Activated CD8-positive, alpha-beta T cell treated with anti-CD3 and anti-CD28 coated beads, Interleukin-2, amount 10 ng/mL, durations not matched to agents 7 days and 5 days (primary cell): ENCODE measurements at regions of chr3 and their contacts with region 1.

Region 1: GRCh38 chr3:100796556-100796955 is 87.3 kb downstream of the TFG start:
- DNase-seq: no peak
- ATAC-seq: no peak
- H3K4me3 Mint-ChIP-seq: peak overlapping the region; percentile 35
- H3K27ac Mint-ChIP-seq: no peak overlapping the region
- H3K4me1 Mint-ChIP-seq: peaks cover 6% of the 10 kb centered on the region
- H3K27me3 Mint-ChIP-seq: peaks cover 5% of the 10 kb centered on the region

Region 2: GRCh38 chr3:100719136-100719535 is 77.4 kb before region 1 on chr3:
- CTCF ChIA-PET with region 1: interaction called, 12 read pairs
- POLR2A ChIA-PET with region 1: no interaction called
- DNase-seq: no peak
- ATAC-seq: no peak
- H3K4me3 Mint-ChIP-seq: no peak overlapping the region
- H3K27ac Mint-ChIP-seq: no peak overlapping the region
- H3K4me1 Mint-ChIP-seq: peaks cover 30% of the 10 kb centered on the region
- H3K27me3 Mint-ChIP-seq: no peaks in the 10 kb centered on the region

Region 3: DNA sequence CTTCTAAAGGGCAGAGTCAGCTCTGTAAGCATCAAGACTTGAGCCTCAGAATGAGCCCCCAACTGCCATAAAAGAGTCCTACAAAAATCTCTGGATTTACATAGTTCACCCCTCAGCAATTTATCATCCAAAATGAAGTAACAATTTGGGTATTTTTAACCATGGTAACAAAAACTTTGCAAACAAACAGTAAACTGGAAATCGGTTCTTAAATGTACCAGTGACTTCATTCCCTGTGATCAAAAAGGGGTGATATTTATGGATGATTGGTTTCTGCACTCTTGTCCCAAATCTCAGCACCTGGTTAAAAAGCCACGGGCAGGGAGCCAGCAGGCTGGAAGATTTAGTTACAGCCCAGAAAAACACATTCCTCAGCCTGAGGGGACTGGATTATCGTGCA is 13.7 kb before region 1 on chr3:
- CTCF ChIA-PET with region 1: interaction called, 32 read pairs
- POLR2A ChIA-PET with region 1: no interaction called
- DNase-seq: no peak
- ATAC-seq: no peak
- H3K4me3 Mint-ChIP-seq: no peak overlapping the region
- H3K27ac Mint-ChIP-seq: no peak overlapping the region
- H3K4me1 Mint-ChIP-seq: no peaks in the 10 kb centered on the region
- H3K27me3 Mint-ChIP-seq: peaks cover 2% of the 10 kb centered on the region

Region 4: DNA sequence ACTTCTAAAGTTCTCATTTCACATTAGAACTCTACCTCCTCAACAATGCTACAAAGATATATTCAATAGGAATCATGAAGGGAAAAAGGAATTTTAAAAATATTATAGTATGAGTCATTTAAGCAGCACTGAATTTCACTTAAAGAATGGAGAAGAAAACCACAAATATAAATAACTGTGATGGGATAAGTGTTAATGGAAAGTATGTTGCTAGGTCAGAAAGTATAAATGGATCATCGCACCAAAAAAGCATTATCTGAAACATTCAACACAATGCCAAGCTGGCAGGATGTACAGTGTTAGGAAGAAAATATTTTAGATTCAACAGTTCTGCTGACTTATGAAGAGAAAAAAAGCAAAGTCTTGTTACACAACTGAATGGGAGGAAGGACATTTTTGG is 14.1 kb after region 1 on chr3:
- CTCF ChIA-PET with region 1: interaction called, 11 read pairs
- POLR2A ChIA-PET with region 1: no interaction called
- DNase-seq: no peak
- ATAC-seq: no peak
- H3K4me3 Mint-ChIP-seq: no peak overlapping the region
- H3K27ac Mint-ChIP-seq: no peak overlapping the region
- H3K4me1 Mint-ChIP-seq: no peaks in the 10 kb centered on the region
- H3K27me3 Mint-ChIP-seq: peaks cover 18% of the 10 kb centered on the region